ENCODE measurements at regions of chr10 and their contacts with region 1.

Region 1: DNA sequence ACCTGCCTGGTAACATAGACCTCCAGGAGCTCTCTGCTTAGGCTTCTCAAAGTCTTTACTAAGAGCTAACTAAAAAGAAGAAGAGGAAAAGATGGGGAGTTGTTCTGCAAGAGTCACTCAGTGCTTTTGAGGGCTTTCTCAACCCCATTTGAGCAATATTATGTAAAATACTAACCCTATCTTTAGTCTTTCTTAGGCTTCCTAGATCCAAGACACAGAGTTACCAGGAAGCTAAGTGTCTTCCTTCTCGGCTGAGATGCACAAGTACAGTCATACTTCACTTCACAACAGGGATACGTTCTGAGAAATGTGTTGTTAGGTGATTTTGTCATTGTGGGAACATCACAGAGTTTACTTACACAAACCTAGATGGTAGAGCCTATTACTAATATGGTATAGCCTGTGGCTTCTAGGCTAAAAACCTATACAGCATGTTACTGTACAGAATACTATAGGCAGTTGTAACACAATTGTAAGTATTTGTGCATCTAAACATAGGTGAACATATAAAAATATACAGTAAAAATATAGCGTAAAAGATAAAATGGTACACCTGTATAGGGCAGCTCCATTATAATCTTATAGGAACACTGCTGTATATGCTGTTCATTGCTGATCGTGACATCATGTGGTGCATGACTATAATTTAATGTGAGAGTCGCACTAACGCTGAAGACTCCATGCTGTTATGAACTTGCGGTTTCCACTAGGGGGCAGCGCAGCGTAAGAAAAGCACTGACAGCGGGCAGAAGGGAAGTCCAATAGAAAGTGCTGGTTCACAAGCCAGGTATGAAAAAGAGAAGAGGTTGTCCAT is 16.3 kb downstream of the ANKRD22 start:
- DNase-seq: peak; percentile 73 to 92 (median 86)
- ATAC-seq: peak; percentile 85
- H3K4me3 ChIP-seq: no peak overlapping the region
- H3K4me3 Mint-ChIP-seq: no peak overlapping the region
- H3K27ac ChIP-seq: no peak overlapping the region
- H3K27ac Mint-ChIP-seq: no peak overlapping the region
- H3K4me1 ChIP-seq: peaks cover 17% of the 10 kb centered on the region
- H3K4me1 Mint-ChIP-seq: peaks cover 33% of the 10 kb centered on the region
- H3K27me3 ChIP-seq: no peaks in the 10 kb centered on the region
- H3K27me3 Mint-ChIP-seq: no peaks in the 10 kb centered on the region
- CTCF ChIP-seq: peak; percentile 78

Region 2: GRCh38 chr10:88810196-88810961 is 24.9 kb before region 1 on chr10:
- CTCF ChIA-PET with region 1: interaction called, 46 read pairs
- POLR2A ChIA-PET with region 1: interaction called, 3 read pairs
- intact Hi-C with region 1: no loop called
- DNase-seq: peak in 5 of 9 experiments; percentile 20 to 77 (median 35)
- ATAC-seq: peak; percentile 73
- H3K4me3 ChIP-seq: no peak overlapping the region
- H3K4me3 Mint-ChIP-seq: no peak overlapping the region
- H3K27ac ChIP-seq: no peak overlapping the region
- H3K27ac Mint-ChIP-seq: no peak overlapping the region
- H3K4me1 ChIP-seq: peaks cover 6% of the 10 kb centered on the region
- H3K4me1 Mint-ChIP-seq: peaks cover 17% of the 10 kb centered on the region
- H3K27me3 ChIP-seq: no peaks in the 10 kb centered on the region
- H3K27me3 Mint-ChIP-seq: no peaks in the 10 kb centered on the region
- CTCF ChIP-seq: peak; percentile 66

Region 3: GRCh38 chr10:88851706-88852105 is 16.4 kb after region 1 on chr10 and contains the start of gene ANKRD22:
- CTCF ChIA-PET with region 1: interaction called, 39 read pairs
- POLR2A ChIA-PET with region 1: no interaction called
- intact Hi-C with region 1: no loop called
- DNase-seq: no peak
- ATAC-seq: no peak
- H3K4me3 ChIP-seq: no peak within 1 kb of the TSS
- H3K4me3 Mint-ChIP-seq: no peak within 1 kb of the TSS
- H3K27ac ChIP-seq: no peak within 1 kb of the TSS
- H3K27ac Mint-ChIP-seq: no peak within 1 kb of the TSS
- H3K4me1 ChIP-seq: no peaks in the 10 kb centered on the region
- H3K4me1 Mint-ChIP-seq: peaks cover 5% of the 10 kb centered on the region
- H3K27me3 ChIP-seq: no peaks in the 10 kb centered on the region
- H3K27me3 Mint-ChIP-seq: peaks cover 2% of the 10 kb centered on the region
- CTCF ChIP-seq: no peak
- total RNA-seq, gene ANKRD22: not detected

Region 4: DNA sequence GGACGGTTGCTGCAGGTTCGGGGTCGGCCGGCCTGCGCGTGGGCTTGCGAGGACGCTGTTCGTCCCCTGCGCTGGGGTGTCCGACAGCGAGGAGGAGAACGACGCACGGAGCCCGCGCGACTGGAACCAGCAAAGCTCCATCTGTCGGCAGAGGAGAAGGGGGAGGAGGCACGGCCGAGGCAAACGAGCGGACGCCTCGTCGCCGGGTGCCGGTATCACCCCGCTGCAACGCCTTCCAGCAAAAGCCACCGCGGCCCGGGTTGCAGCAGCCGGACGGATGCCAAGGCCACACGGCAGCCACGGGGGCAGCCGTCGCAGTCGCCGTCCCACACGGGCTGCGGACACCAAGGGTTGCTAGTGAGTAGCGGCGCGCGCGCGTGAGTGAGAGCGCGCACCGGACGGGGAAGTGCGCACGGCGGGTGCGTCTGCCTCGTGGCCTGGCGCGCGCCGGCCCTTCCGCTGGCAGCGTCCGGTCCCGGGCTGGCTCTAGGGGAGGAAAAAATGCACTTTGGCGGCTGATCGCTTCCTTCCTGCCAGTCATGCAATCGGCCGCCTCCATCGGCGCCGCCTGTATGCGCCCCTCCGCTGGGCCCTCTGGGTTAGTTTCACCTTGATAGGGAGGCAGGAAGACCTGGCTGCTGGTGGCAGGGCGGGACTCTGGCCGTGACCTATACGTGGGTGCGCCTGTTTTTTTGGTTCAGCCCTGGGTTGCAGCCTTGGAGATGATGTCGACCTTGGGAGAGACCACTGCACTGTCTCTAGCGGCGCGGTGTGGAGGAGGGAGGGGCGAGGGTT is 45.2 kb after region 1 on chr10:
- CTCF ChIA-PET with region 1: interaction called, 16 read pairs
- POLR2A ChIA-PET with region 1: interaction called, 10 read pairs
- intact Hi-C with region 1: loop called (anchors 1 to 2 kb)
- DNase-seq: peak; percentile 43 to 86 (median 70)
- ATAC-seq: peak; percentile 69
- H3K4me3 ChIP-seq: peak overlapping the region; percentile 81 to 89
- H3K4me3 Mint-ChIP-seq: peak overlapping the region; percentile 98
- H3K27ac ChIP-seq: peak overlapping the region; percentile 76 to 79
- H3K27ac Mint-ChIP-seq: peak overlapping the region; percentile 96
- H3K4me1 ChIP-seq: peaks cover 37% of the 10 kb centered on the region
- H3K4me1 Mint-ChIP-seq: peaks cover 61% of the 10 kb centered on the region
- H3K27me3 ChIP-seq: no peaks in the 10 kb centered on the region
- H3K27me3 Mint-ChIP-seq: no peaks in the 10 kb centered on the region
- CTCF ChIP-seq: peak; percentile 17

Region 5: GRCh38 chr10:88913127-88913526 is 77.8 kb after region 1 on chr10:
- CTCF ChIA-PET with region 1: interaction called, 16 read pairs
- POLR2A ChIA-PET with region 1: no interaction called
- intact Hi-C with region 1: no loop called
- DNase-seq: no peak
- ATAC-seq: no peak
- H3K4me3 ChIP-seq: no peak overlapping the region
- H3K4me3 Mint-ChIP-seq: no peak overlapping the region
- H3K27ac ChIP-seq: no peak overlapping the region
- H3K27ac Mint-ChIP-seq: no peak overlapping the region
- H3K4me1 ChIP-seq: no peaks in the 10 kb centered on the region
- H3K4me1 Mint-ChIP-seq: peaks cover 2% of the 10 kb centered on the region
- H3K27me3 ChIP-seq: no peaks in the 10 kb centered on the region
- H3K27me3 Mint-ChIP-seq: no peaks in the 10 kb centered on the region
- CTCF ChIP-seq: no peak

Region 6: GRCh38 chr10:89074120-89074519 is 238.8 kb after region 1 on chr10:
- CTCF ChIA-PET with region 1: no interaction called
- POLR2A ChIA-PET with region 1: no interaction called
- intact Hi-C with region 1: no loop called
- DNase-seq: no peak
- ATAC-seq: no peak
- H3K4me3 ChIP-seq: no peak overlapping the region
- H3K4me3 Mint-ChIP-seq: no peak overlapping the region
- H3K27ac ChIP-seq: no peak overlapping the region
- H3K27ac Mint-ChIP-seq: no peak overlapping the region
- H3K4me1 ChIP-seq: no peaks in the 10 kb centered on the region
- H3K4me1 Mint-ChIP-seq: no peaks in the 10 kb centered on the region
- H3K27me3 ChIP-seq: no peaks in the 10 kb centered on the region
- H3K27me3 Mint-ChIP-seq: peaks cover 4% of the 10 kb centered on the region
- CTCF ChIP-seq: no peak

Measured in CD8-positive, alpha-beta T cell (primary cell).